CD4-positive, alpha-beta memory T cell (primary cell): ENCODE measurements at regions of chr5 and their contacts with region 1.

Region 1: DNA sequence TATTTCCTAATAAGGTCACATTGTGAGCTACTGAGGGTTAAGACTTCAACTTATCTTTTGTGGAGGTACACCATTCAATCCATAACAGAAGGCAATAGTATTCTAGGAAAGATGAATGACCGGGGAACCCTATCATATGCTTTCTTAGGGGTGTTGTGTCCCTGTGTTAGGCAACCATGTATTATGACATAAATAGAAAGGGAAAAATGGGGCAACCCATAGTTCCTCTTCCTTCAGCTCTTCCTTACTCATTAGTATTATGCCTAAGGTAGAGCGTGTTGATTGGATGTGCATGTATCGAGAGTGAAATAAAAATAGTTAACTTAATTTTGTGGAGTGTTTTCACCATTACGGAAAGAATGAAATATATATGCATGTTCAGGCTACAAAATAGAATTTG is 6.0 kb upstream of the CCNJL start:
- DNase-seq: no peak
- H3K4me3 ChIP-seq: no peak overlapping the region
- H3K4me3 Mint-ChIP-seq: no peak overlapping the region
- H3K27ac ChIP-seq: no peak overlapping the region
- H3K27ac Mint-ChIP-seq: no peak overlapping the region
- H3K4me1 ChIP-seq: no peaks in the 10 kb centered on the region
- H3K4me1 Mint-ChIP-seq: no peaks in the 10 kb centered on the region
- H3K27me3 ChIP-seq: no peaks in the 10 kb centered on the region
- H3K27me3 Mint-ChIP-seq: peaks cover 11 to 32% of the 10 kb centered on the region in 2 donors

Region 2: GRCh38 chr5:160289721-160290120 is 28.7 kb before region 1 on chr5:
- CTCF ChIA-PET with region 1: no interaction called
- POLR2A ChIA-PET with region 1: no interaction called
- intact Hi-C with region 1: loop called (anchors 1 kb)
- DNase-seq: no peak
- H3K4me3 ChIP-seq: no peak overlapping the region
- H3K4me3 Mint-ChIP-seq: no peak overlapping the region
- H3K27ac ChIP-seq: no peak overlapping the region
- H3K27ac Mint-ChIP-seq: no peak overlapping the region
- H3K4me1 ChIP-seq: no peaks in the 10 kb centered on the region
- H3K4me1 Mint-ChIP-seq: no peaks in the 10 kb centered on the region
- H3K27me3 ChIP-seq: no peaks in the 10 kb centered on the region
- H3K27me3 Mint-ChIP-seq: peaks cover 8 to 11% of the 10 kb centered on the region in 2 donors

Region 3: DNA sequence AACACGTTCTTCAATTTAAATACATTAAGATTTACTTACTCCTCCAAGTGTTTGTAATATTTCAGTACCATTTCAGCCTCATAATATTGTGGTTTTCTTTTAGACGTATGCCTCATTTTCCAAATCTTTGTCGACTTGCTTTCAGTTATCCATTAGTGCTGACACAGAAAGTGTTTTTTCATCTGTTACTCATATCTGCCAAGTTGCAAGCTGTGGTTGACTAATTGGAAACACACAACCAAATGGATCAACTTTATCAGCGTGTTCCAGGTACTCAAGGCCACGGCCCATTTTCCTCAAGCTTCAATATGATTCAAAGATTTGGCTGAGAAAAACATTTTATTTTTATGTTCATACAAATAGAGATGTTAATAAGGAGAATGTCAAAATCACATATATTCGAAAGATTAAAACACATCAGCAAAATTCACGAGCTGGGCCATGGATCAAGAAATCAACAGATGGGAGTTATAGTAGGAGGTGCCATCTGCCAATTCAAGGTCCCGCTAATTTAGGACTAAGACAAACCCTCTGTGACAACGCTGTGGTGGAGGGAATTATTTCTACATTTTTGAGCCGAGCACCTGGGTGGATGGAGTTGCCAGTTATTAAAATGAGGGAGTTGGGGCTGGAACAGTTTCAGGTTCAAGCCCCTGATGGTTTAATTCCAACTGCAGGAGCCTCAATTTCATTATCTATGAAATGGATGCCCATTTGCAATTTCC is 21.2 kb after region 1 on chr5:
- CTCF ChIA-PET with region 1: no interaction called
- POLR2A ChIA-PET with region 1: no interaction called
- intact Hi-C with region 1: no loop called
- DNase-seq: no peak
- H3K4me3 ChIP-seq: no peak overlapping the region
- H3K4me3 Mint-ChIP-seq: no peak overlapping the region
- H3K27ac ChIP-seq: no peak overlapping the region
- H3K27ac Mint-ChIP-seq: no peak overlapping the region
- H3K4me1 ChIP-seq: no peaks in the 10 kb centered on the region
- H3K4me1 Mint-ChIP-seq: no peaks in the 10 kb centered on the region
- H3K27me3 ChIP-seq: no peaks in the 10 kb centered on the region
- H3K27me3 Mint-ChIP-seq: peaks cover 2 to 6% of the 10 kb centered on the region in 2 donors

Region 4: DNA sequence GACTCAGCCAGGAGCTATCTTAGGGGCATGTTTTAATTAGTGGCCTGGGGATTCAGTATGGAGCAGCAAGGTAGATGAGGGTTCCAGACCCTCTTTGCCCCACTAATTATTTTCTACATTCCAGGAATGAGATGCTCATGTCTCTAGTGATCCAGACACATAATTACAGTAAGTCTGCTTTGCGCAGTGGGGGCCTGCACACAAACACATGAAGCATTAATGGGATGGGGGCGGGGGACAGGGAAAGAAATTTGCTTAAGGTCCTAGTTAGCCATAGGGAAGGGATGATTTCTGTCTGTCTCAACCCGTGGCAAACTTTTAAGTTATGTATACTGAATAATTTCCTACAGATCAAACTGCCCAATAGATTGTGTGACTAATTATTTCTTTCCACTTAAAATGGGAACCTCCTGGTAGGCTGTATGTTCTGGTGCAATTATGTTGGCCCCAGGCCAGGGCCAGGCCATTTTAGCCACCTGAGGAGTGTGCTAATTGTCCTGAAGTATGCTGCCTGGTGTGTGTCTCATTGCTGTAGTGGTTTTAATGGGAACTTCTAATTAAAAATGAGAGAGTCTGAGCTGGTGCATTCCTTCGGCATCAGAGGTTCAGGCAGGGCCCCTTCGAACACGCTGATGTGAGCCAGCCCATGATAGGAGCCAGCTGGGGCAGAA is 237.7 kb after region 1 on chr5:
- CTCF ChIA-PET with region 1: no interaction called
- POLR2A ChIA-PET with region 1: no interaction called
- intact Hi-C with region 1: no loop called
- DNase-seq: no peak
- H3K4me3 ChIP-seq: no peak overlapping the region
- H3K4me3 Mint-ChIP-seq: no peak overlapping the region
- H3K27ac ChIP-seq: no peak overlapping the region
- H3K27ac Mint-ChIP-seq: no peak overlapping the region
- H3K4me1 ChIP-seq: no peaks in the 10 kb centered on the region
- H3K4me1 Mint-ChIP-seq: no peaks in the 10 kb centered on the region
- H3K27me3 ChIP-seq: no peaks in the 10 kb centered on the region
- H3K27me3 Mint-ChIP-seq: peaks cover 0 to 2% of the 10 kb centered on the region in 2 donors